ENCODE measurements at regions of chr11 and their contacts with region 1.

Region 1: DNA sequence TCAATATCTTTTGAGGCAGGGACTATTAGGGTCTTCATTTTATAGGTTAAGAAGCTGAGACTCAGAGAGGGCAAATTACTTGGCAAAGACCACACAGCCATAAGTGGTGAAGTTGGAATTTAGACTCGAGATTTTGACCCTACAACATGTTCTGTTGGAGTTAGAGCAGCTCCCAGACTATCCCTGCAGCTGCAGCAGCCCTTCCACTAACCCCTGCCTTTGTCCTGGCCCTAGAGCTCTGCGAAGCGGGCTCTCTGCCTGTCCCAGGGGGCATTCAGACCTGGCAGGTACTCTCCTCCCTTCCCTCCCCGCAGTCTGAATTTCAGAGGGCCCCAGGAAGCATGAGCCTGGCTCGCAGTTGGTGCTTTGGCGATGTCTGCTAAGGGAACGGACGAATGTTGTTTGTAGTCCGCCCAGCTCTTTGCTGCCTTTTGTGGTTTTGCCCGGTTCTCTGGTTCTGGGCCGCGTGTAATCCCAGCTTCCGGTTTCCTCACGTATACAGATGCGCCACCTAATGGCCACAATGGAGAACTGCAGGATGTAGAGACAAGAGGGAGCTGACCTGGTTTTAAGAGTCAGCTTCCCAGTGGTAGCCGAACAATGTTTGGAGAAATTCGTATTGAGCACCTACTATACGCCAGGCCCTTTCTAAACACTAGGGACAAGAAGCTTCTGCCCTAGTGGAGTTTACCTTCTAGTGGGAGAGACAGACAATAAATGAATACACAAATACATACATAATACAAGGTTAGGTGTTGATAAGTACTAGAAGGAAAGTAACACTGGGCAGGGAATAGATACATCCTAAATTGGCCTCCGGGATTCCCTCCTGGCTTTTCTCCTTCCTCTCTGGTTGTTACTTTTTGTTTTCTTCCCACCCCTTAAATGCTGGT is 125.2 kb downstream of the ST3GAL4 start:
- DNase-seq: peak; percentile 94
- H3K4me3 ChIP-seq: peak overlapping the region in 1 of 2 donors; percentile 8
- H3K27ac ChIP-seq: peak overlapping the region; percentile 34 to 81
- H3K4me1 ChIP-seq: peaks cover 3% of the 10 kb centered on the region
- H3K27me3 ChIP-seq: no peaks in the 10 kb centered on the region
- CTCF ChIP-seq: peak; percentile 97 to 98 (median 98)
- POLR2A ChIP-seq: no peak

Region 2: GRCh38 chr11:126426820-126427749 is 53.6 kb before region 1 on chr11:
- intact Hi-C with region 1: no loop called
- DNase-seq: peak; percentile 49
- H3K4me3 ChIP-seq: no peak overlapping the region
- H3K27ac ChIP-seq: peak overlapping the region; percentile 35 to 81
- H3K4me1 ChIP-seq: peaks cover 45% of the 10 kb centered on the region
- H3K27me3 ChIP-seq: no peaks in the 10 kb centered on the region
- CTCF ChIP-seq: no peak
- POLR2A ChIP-seq: no peak

Region 3: DNA sequence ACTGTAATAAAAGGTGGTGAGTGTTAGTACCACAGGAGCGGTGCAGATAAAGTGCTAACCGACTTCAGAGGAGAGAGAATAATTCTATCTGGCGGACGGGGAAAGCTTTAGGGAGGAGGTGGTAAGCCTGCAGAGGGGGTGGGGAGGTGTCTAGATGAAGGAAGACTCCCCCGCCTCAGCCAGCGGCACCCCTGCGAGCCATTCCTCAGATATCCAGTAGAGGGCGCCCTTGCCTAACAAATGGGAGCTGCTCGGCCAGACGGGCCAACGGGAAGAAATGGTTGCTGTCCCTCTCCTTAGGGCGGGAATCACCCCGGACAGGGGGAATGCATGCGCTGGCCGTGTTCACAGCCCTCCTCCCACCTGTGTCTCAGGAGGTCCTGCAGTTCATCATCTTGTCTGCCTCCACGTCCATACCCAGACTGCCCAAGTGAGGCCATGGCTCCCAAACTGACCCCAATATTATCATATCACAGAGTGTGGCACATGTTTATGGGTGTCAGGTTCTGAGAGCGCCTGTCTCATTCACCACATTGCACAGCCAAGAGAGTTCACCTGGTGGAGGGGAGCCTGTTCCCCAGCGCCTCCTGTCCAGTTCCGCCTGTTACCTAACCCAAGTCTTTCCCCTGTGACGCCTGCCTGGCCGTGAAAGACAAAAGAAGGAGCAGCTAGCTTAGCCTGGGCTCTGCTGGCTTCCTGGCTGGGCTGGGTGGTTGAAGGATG is 39.7 kb before region 1 on chr11:
- intact Hi-C with region 1: loop called (anchors 5 kb)
- DNase-seq: peak; percentile 92
- H3K4me3 ChIP-seq: peak overlapping the region in 1 of 2 donors; percentile 11
- H3K27ac ChIP-seq: no peak overlapping the region
- H3K4me1 ChIP-seq: no peaks in the 10 kb centered on the region
- H3K27me3 ChIP-seq: no peaks in the 10 kb centered on the region
- CTCF ChIP-seq: peak; percentile 88 to 97 (median 97)
- POLR2A ChIP-seq: no peak

Region 4: GRCh38 chr11:126949066-126949891 is 468.6 kb after region 1 on chr11:
- intact Hi-C with region 1: no loop called
- DNase-seq: no peak
- H3K4me3 ChIP-seq: no peak overlapping the region
- H3K27ac ChIP-seq: no peak overlapping the region
- H3K4me1 ChIP-seq: no peaks in the 10 kb centered on the region
- H3K27me3 ChIP-seq: no peaks in the 10 kb centered on the region
- CTCF ChIP-seq: no peak
- POLR2A ChIP-seq: no peak